ENCODE measurements at regions of chr3 and their contacts with region 1.

Region 1: GRCh38 chr3:31695280-31696008 is 162.7 kb downstream of the STT3B start:
- DNase-seq: peak in 11 of 14 experiments; percentile 2 to 50 (median 13)
- ATAC-seq: peak; percentile 48
- H3K4me3 ChIP-seq: no peak overlapping the region
- H3K4me3 Mint-ChIP-seq: no peak overlapping the region
- H3K27ac ChIP-seq: no peak overlapping the region
- H3K27ac Mint-ChIP-seq: no peak overlapping the region
- H3K4me1 ChIP-seq: no peaks in the 10 kb centered on the region
- H3K4me1 Mint-ChIP-seq: no peaks in the 10 kb centered on the region
- H3K27me3 ChIP-seq: no peaks in the 10 kb centered on the region
- H3K27me3 Mint-ChIP-seq: no peaks in the 10 kb centered on the region
- CTCF ChIP-seq: peak; percentile 26

Region 2: GRCh38 chr3:30768703-30769685 is 926.5 kb before region 1 on chr3:
- CTCF ChIA-PET with region 1: no interaction called
- POLR2A ChIA-PET with region 1: no interaction called
- intact Hi-C with region 1: loop called in 1 of 2 experiments (anchors 2 kb)
- DNase-seq: peak; percentile 49 to 78 (median 64)
- ATAC-seq: peak; percentile 60
- H3K4me3 ChIP-seq: no peak overlapping the region
- H3K4me3 Mint-ChIP-seq: no peak overlapping the region
- H3K27ac ChIP-seq: no peak overlapping the region
- H3K27ac Mint-ChIP-seq: no peak overlapping the region
- H3K4me1 ChIP-seq: no peaks in the 10 kb centered on the region
- H3K4me1 Mint-ChIP-seq: peaks cover 5% of the 10 kb centered on the region
- H3K27me3 ChIP-seq: no peaks in the 10 kb centered on the region
- H3K27me3 Mint-ChIP-seq: peaks cover 9% of the 10 kb centered on the region
- CTCF ChIP-seq: peak; percentile 83

Region 3: DNA sequence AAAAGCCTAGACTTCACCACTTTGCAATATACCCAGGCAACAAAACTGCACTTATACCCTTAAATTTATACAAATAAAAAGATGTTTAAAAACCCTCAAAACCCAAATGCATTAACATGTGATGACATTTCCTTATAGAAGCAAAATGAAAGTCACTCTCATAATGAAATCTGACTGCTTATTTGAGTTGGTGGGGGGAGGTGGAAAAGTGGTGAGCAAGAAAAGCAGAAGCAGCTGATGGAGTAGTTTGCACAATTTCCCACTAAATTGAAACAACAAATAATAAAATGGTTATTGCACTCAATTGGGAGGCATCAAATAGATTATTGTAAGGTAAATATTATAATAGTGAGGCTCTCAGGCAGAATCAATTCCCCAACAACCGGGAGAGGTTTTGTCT is 747.0 kb before region 1 on chr3:
- CTCF ChIA-PET with region 1: no interaction called
- POLR2A ChIA-PET with region 1: no interaction called
- intact Hi-C with region 1: loop called in 1 of 2 experiments (anchors 10 kb)
- DNase-seq: no peak
- ATAC-seq: no peak
- H3K4me3 ChIP-seq: no peak overlapping the region
- H3K4me3 Mint-ChIP-seq: no peak overlapping the region
- H3K27ac ChIP-seq: no peak overlapping the region
- H3K27ac Mint-ChIP-seq: no peak overlapping the region
- H3K4me1 ChIP-seq: no peaks in the 10 kb centered on the region
- H3K4me1 Mint-ChIP-seq: no peaks in the 10 kb centered on the region
- H3K27me3 ChIP-seq: no peaks in the 10 kb centered on the region
- H3K27me3 Mint-ChIP-seq: peaks cover 4% of the 10 kb centered on the region
- CTCF ChIP-seq: no peak

Region 4: DNA sequence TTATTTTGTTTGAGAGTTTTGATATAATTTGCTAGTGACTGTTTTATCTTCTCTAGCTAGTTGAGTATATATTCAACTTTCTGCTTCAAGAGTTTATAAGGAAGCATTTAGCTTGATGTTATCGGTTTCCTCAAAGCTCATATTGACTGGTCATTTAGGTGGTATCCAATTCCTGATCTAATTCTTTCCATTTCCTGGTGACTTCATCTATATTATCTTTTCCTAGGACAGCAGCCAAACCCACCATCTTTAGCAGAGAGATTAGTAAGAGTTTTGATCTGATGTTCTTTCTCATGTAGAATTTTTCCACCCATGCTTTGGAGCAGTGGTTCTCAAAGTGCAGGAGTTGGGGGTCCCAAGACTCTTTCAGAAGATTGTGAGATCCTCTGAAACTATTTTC is 311.3 kb before region 1 on chr3:
- CTCF ChIA-PET with region 1: no interaction called
- POLR2A ChIA-PET with region 1: no interaction called
- intact Hi-C with region 1: no loop called
- DNase-seq: no peak
- ATAC-seq: no peak
- H3K4me3 ChIP-seq: no peak overlapping the region
- H3K4me3 Mint-ChIP-seq: no peak overlapping the region
- H3K27ac ChIP-seq: no peak overlapping the region
- H3K27ac Mint-ChIP-seq: no peak overlapping the region
- H3K4me1 ChIP-seq: no peaks in the 10 kb centered on the region
- H3K4me1 Mint-ChIP-seq: no peaks in the 10 kb centered on the region
- H3K27me3 ChIP-seq: no peaks in the 10 kb centered on the region
- H3K27me3 Mint-ChIP-seq: no peaks in the 10 kb centered on the region
- CTCF ChIP-seq: no peak

Region 5: GRCh38 chr3:31550452-31551251 is 144.8 kb before region 1 on chr3:
- CTCF ChIA-PET with region 1: no interaction called
- POLR2A ChIA-PET with region 1: no interaction called
- intact Hi-C with region 1: loop called in 1 of 2 experiments (anchors 5 kb)
- DNase-seq: peak in 3 of 14 experiments; percentile 52 to 70 (median 67)
- ATAC-seq: peak; percentile 70
- H3K4me3 ChIP-seq: no peak overlapping the region
- H3K4me3 Mint-ChIP-seq: peak overlapping the region; percentile 38
- H3K27ac ChIP-seq: no peak overlapping the region
- H3K27ac Mint-ChIP-seq: peak overlapping the region; percentile 40
- H3K4me1 ChIP-seq: peaks cover 18% of the 10 kb centered on the region
- H3K4me1 Mint-ChIP-seq: peaks cover 94% of the 10 kb centered on the region
- H3K27me3 ChIP-seq: no peaks in the 10 kb centered on the region
- H3K27me3 Mint-ChIP-seq: no peaks in the 10 kb centered on the region
- CTCF ChIP-seq: peak; percentile 86

Region 6: GRCh38 chr3:31670136-31670535 is 25.3 kb before region 1 on chr3:
- CTCF ChIA-PET with region 1: no interaction called
- POLR2A ChIA-PET with region 1: no interaction called
- intact Hi-C with region 1: no loop called
- DNase-seq: peak in 2 of 14 experiments; percentile 35 to 48
- ATAC-seq: no peak
- H3K4me3 ChIP-seq: no peak overlapping the region
- H3K4me3 Mint-ChIP-seq: no peak overlapping the region
- H3K27ac ChIP-seq: no peak overlapping the region
- H3K27ac Mint-ChIP-seq: no peak overlapping the region
- H3K4me1 ChIP-seq: no peaks in the 10 kb centered on the region
- H3K4me1 Mint-ChIP-seq: no peaks in the 10 kb centered on the region
- H3K27me3 ChIP-seq: peaks cover 0 to 3% of the 10 kb centered on the region in 2 experiments
- H3K27me3 Mint-ChIP-seq: no peaks in the 10 kb centered on the region
- CTCF ChIP-seq: no peak

Region 7: GRCh38 chr3:31724661-31725060 is 29.2 kb after region 1 on chr3:
- CTCF ChIA-PET with region 1: no interaction called
- POLR2A ChIA-PET with region 1: no interaction called
- intact Hi-C with region 1: no loop called
- DNase-seq: no peak
- ATAC-seq: no peak
- H3K4me3 ChIP-seq: no peak overlapping the region
- H3K4me3 Mint-ChIP-seq: no peak overlapping the region
- H3K27ac ChIP-seq: no peak overlapping the region
- H3K27ac Mint-ChIP-seq: no peak overlapping the region
- H3K4me1 ChIP-seq: no peaks in the 10 kb centered on the region
- H3K4me1 Mint-ChIP-seq: no peaks in the 10 kb centered on the region
- H3K27me3 ChIP-seq: peaks cover 0 to 2% of the 10 kb centered on the region in 2 experiments
- H3K27me3 Mint-ChIP-seq: no peaks in the 10 kb centered on the region
- CTCF ChIP-seq: no peak

Measured in CD4-positive, alpha-beta T cell (primary cell).